Activated B cell treated with CpG ODN at 0.5 μM for 24 hours (primary cell): ENCODE measurements at regions of chr11 and their contacts with region 1.

Region 1: DNA sequence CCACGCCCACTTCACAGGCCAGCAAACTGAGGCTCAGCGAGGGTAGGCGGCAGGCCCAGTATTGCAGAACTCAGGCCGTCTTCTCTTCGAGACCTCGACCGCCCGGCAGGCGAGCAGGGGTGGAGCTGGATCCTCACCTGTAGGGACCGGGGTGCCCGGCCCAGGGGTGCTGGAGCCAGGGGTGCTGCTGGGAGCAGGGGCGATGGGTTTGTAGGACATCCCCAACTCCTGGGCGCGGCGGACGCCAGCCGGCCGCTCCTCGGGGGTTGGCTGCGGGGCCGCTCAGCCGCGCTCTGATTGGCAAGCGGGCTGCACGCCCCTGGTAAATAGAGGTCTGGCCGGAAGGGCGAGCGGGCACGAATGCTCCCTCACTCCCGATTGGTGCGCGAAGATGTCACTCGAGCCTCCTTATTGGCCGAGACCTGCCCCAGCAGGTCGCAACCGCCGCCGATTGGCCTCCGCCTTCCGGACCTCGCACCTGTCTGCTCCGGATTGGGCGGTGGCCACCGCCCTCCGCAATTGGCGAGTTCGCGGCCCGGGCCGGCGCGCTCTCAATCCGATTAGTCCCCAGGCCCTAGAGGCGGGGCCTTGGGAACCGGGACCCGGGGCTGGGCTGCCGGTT is at the start of gene CDK2AP2:
- DNase-seq: peak; percentile 90
- ATAC-seq: peak; percentile 77
- H3K4me3 Mint-ChIP-seq: peak within 1 kb of the TSS; percentile 88
- H3K27ac Mint-ChIP-seq: peak within 1 kb of the TSS; percentile 94
- H3K4me1 Mint-ChIP-seq: peaks cover 42% of the 10 kb centered on the region
- H3K27me3 Mint-ChIP-seq: no peaks in the 10 kb centered on the region
- CTCF ChIP-seq: no peak
- total RNA-seq, gene CDK2AP2: 67.1 and 68.5 TPM in 2 replicates

Region 2: GRCh38 chr11:66616379-66617154 is 891.4 kb before region 1 on chr11 and contains the start of gene RBM14:
- CTCF ChIA-PET with region 1: no interaction called
- POLR2A ChIA-PET with region 1: no interaction called
- intact Hi-C with region 1: loop called (anchors 5 kb)
- DNase-seq: peak; percentile 97
- ATAC-seq: peak; percentile 88
- H3K4me3 Mint-ChIP-seq: peak within 1 kb of the TSS; percentile 98
- H3K27ac Mint-ChIP-seq: peak within 1 kb of the TSS; percentile 99
- H3K4me1 Mint-ChIP-seq: peaks cover 63% of the 10 kb centered on the region
- H3K27me3 Mint-ChIP-seq: no peaks in the 10 kb centered on the region
- CTCF ChIP-seq: no peak
- total RNA-seq, gene RBM14: 147 and 160 TPM in 2 replicates

Region 3: GRCh38 chr11:67288452-67289225 is 219.3 kb before region 1 on chr11:
- CTCF ChIA-PET with region 1: no interaction called
- POLR2A ChIA-PET with region 1: no interaction called
- intact Hi-C with region 1: no loop called
- DNase-seq: peak; percentile 96
- ATAC-seq: peak; percentile 76
- H3K4me3 Mint-ChIP-seq: peak overlapping the region; percentile 80
- H3K27ac Mint-ChIP-seq: peak overlapping the region; percentile 98
- H3K4me1 Mint-ChIP-seq: peaks cover 46% of the 10 kb centered on the region
- H3K27me3 Mint-ChIP-seq: no peaks in the 10 kb centered on the region
- CTCF ChIP-seq: no peak

Region 4: GRCh38 chr11:67391304-67392132 is 116.5 kb before region 1 on chr11 and contains the start of gene RAD9A:
- CTCF ChIA-PET with region 1: interaction called, 4 read pairs
- POLR2A ChIA-PET with region 1: interaction called, 9 read pairs
- intact Hi-C with region 1: loop called (anchors 1 kb)
- DNase-seq: peak; percentile 85
- ATAC-seq: peak; percentile 79
- H3K4me3 Mint-ChIP-seq: peak within 1 kb of the TSS; percentile 89
- H3K27ac Mint-ChIP-seq: peak within 1 kb of the TSS; percentile 80
- H3K4me1 Mint-ChIP-seq: peaks cover 40% of the 10 kb centered on the region
- H3K27me3 Mint-ChIP-seq: no peaks in the 10 kb centered on the region
- CTCF ChIP-seq: no peak
- total RNA-seq, gene RAD9A: 30.4 and 35.2 TPM in 2 replicates

Region 5: GRCh38 chr11:67439321-67439883 is 68.6 kb before region 1 on chr11:
- CTCF ChIA-PET with region 1: interaction called, 8 read pairs
- POLR2A ChIA-PET with region 1: interaction called, 45 read pairs
- intact Hi-C with region 1: loop called (anchors 1 kb)
- DNase-seq: peak; percentile 26
- ATAC-seq: no peak
- H3K4me3 Mint-ChIP-seq: peak overlapping the region; percentile 96
- H3K27ac Mint-ChIP-seq: peak overlapping the region; percentile 88
- H3K4me1 Mint-ChIP-seq: peaks cover 76% of the 10 kb centered on the region
- H3K27me3 Mint-ChIP-seq: no peaks in the 10 kb centered on the region
- CTCF ChIP-seq: no peak

Region 6: GRCh38 chr11:67482825-67483798 is 24.9 kb before region 1 on chr11 and contains the start of gene AIP:
- CTCF ChIA-PET with region 1: no interaction called
- POLR2A ChIA-PET with region 1: interaction called, 11 read pairs
- intact Hi-C with region 1: loop called (anchors 1 kb)
- DNase-seq: peak; percentile 87
- ATAC-seq: peak; percentile 85
- H3K4me3 Mint-ChIP-seq: peak within 1 kb of the TSS; percentile 93
- H3K27ac Mint-ChIP-seq: peak within 1 kb of the TSS; percentile 98
- H3K4me1 Mint-ChIP-seq: peaks cover 58% of the 10 kb centered on the region
- H3K27me3 Mint-ChIP-seq: no peaks in the 10 kb centered on the region
- CTCF ChIP-seq: no peak
- total RNA-seq, gene AIP: 108 and 114 TPM in 2 replicates

Region 7: DNA sequence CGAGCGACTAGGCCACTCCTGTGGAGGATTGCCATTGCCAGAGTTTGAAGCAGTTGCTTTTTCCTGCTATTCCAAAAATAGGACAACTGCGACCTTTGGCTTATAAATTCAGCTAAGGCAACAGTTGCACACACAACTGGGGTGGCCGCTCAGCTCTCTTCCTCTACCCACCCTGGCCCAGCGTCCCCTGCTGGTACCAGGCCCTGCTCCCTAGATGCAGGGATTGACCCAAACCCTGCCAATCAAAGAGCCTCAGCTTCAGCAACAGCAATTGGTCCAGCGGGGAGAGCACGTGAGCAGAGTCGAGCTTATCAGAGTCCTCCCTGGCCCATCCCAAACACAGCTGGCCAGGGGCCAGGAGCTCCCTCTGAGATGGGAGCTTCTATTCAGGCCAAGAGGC is 37.3 kb after region 1 on chr11:
- CTCF ChIA-PET with region 1: no interaction called
- POLR2A ChIA-PET with region 1: no interaction called
- intact Hi-C with region 1: no loop called
- DNase-seq: no peak
- ATAC-seq: no peak
- H3K4me3 Mint-ChIP-seq: no peak overlapping the region
- H3K27ac Mint-ChIP-seq: no peak overlapping the region
- H3K4me1 Mint-ChIP-seq: no peaks in the 10 kb centered on the region
- H3K27me3 Mint-ChIP-seq: peaks cover 10% of the 10 kb centered on the region
- CTCF ChIP-seq: no peak

Region 8: GRCh38 chr11:67606492-67607201 is 98.7 kb after region 1 on chr11 and contains the start of gene NDUFV1:
- CTCF ChIA-PET with region 1: no interaction called
- POLR2A ChIA-PET with region 1: no interaction called
- intact Hi-C with region 1: loop called (anchors 1 kb)
- DNase-seq: peak; percentile 93
- ATAC-seq: peak; percentile 99
- H3K4me3 Mint-ChIP-seq: peak within 1 kb of the TSS; percentile 90
- H3K27ac Mint-ChIP-seq: peak within 1 kb of the TSS; percentile 73
- H3K4me1 Mint-ChIP-seq: peaks cover 24% of the 10 kb centered on the region
- H3K27me3 Mint-ChIP-seq: peaks cover 11% of the 10 kb centered on the region
- CTCF ChIP-seq: no peak
- total RNA-seq, gene NDUFV1: 207 and 221 TPM in 2 replicates